Ovary (tissue), 10 donors: ENCODE measurements at regions of chr16 and their contacts with region 1.

Region 1: GRCh38 chr16:50072730-50073129 is 7.0 kb downstream of the HEATR3 start:
- DNase-seq: no peak
- H3K4me3 ChIP-seq: no peak overlapping the region
- H3K27ac ChIP-seq: no peak overlapping the region
- H3K4me1 ChIP-seq: no peaks in the 10 kb centered on the region
- H3K27me3 ChIP-seq: no peaks in the 10 kb centered on the region
- CTCF ChIP-seq: no peak
- EP300 ChIP-seq: no peak
- POLR2A ChIP-seq: no peak

Region 2: DNA sequence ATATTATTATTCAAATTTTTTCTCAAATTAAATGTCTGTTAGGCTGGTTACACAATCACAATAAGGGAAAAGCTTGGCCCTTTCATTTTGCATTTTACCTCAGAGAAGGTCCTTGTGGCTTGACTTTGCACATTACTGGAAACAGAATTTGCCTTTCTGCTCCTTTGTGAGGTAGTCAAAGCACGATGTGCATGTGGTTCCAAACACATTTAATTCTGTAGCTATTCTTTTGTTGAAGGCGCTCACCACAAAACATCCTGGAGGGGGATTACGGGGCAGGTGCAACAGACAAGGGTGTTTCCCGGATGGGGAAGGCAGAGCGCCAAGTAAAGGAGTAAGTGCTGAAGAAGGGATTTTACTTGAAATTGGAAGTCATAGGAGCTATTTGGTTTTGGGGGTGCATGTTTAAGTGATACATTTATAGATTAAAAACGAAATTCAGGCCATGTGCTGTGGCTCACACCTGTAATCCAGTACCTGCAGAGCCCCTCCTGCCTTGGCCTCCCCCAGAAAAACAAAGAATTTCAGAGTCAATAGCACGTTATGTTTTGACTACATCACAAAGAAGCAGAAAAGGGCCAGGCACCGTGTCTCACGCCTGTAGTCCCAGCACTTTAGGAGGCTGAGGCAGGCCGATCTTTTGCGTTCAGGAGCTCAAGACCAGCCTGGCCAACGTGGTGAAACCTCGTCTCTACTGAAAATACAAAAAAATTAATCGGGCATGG is 49.2 kb after region 1 on chr16:
- intact Hi-C with region 1: loop called in 1 of 4 experiments (anchors 1 kb)
- DNase-seq: no peak
- H3K4me3 ChIP-seq: no peak overlapping the region
- H3K27ac ChIP-seq: no peak overlapping the region
- H3K4me1 ChIP-seq: no peaks in the 10 kb centered on the region
- H3K27me3 ChIP-seq: no peaks in the 10 kb centered on the region
- CTCF ChIP-seq: no peak
- EP300 ChIP-seq: no peak
- POLR2A ChIP-seq: no peak